ENCODE measurements at regions of chr6 and their contacts with region 1.

Region 1: DNA sequence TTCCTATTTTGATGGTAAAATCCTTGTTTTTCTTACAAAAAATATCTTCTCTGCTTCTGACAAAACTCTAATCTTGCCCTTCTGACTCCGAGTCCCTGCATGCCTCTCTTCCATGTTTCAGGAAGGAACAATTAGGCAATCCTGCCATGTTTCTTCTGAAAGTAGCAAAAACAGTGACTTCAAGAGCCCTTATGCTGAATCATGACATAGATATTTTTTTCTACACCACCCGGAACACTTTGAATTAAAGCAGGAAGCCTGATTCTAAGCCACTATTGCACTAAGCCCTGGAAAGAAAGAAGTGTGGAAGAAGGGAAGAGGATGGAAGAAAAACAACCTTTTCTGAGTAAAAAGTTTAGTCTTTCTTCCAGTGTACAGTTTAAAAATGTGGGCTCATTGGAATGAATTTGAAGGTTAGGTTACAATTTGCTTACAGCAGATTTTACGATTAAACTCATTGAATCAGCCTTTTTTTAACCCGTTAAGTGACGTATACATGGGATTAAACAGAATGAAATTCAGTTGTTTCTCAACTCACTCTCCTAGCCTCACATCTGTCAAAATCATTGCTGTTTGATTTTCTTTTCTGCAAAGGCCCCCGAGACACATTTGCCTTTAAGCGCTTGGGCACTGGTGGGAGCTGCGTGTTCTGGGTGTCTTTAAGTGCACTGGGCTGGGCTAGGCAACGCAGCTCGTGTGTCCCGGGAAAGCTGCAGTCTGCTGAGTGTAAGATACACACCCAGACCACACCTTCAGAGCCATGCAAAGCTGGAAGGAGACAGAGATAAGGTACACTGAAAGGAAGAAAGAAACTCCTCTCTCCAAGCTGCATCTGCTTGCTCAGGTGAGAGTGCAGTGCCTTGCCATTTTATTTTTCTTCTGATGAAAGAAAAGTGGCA is 159.4 kb upstream of the CITED2 start:
- DNase-seq: peak; percentile 83
- ATAC-seq: peak; percentile 89
- H3K4me3 ChIP-seq: no peak overlapping the region
- H3K27ac ChIP-seq: peak overlapping the region; percentile 88
- H3K4me1 ChIP-seq: peaks cover 14% of the 10 kb centered on the region
- H3K27me3 ChIP-seq: no peaks in the 10 kb centered on the region
- CTCF ChIP-seq: no peak
- POLR2A ChIP-seq: no peak
- RAD21 ChIP-seq: no peak

Region 2: GRCh38 chr6:139577763-139578604 is 44.2 kb after region 1 on chr6:
- CTCF ChIA-PET with region 1: no interaction called
- POLR2A ChIA-PET with region 1: no interaction called
- dilution Hi-C with region 1: no loop called
- in situ Hi-C with region 1: no loop called
- intact Hi-C with region 1: loop called (anchors 5 kb)
- DNase-seq: peak; percentile 94
- ATAC-seq: peak; percentile 94
- H3K4me3 ChIP-seq: no peak overlapping the region
- H3K27ac ChIP-seq: peak overlapping the region; percentile 98
- H3K4me1 ChIP-seq: peaks cover 15% of the 10 kb centered on the region
- H3K27me3 ChIP-seq: no peaks in the 10 kb centered on the region
- CTCF ChIP-seq: no peak
- POLR2A ChIP-seq: no peak
- RAD21 ChIP-seq: peak; percentile 25

Measured in IMR-90 (cell line).